Activated CD8-positive, alpha-beta T cell treated with anti-CD3 and anti-CD28 coated beads for 36 hours (primary cell): ENCODE measurements at regions of chr14 and their contacts with region 1.

Region 1: GRCh38 chr14:50830932-50831725 is at the start of gene NIN:
- DNase-seq: peak; percentile 80
- ATAC-seq: peak; percentile 86
- H3K4me3 Mint-ChIP-seq: peak within 1 kb of the TSS; percentile 87
- H3K27ac Mint-ChIP-seq: peak within 1 kb of the TSS; percentile 93
- H3K4me1 Mint-ChIP-seq: peaks cover 54% of the 10 kb centered on the region
- H3K27me3 Mint-ChIP-seq: no peaks in the 10 kb centered on the region
- CTCF ChIP-seq: no peak
- total RNA-seq, gene NIN: 71.9 to 72.8 TPM

Region 2: GRCh38 chr14:50726372-50727107 is 104.6 kb before region 1 on chr14:
- CTCF ChIA-PET with region 1: no interaction called
- POLR2A ChIA-PET with region 1: no interaction called
- intact Hi-C with region 1: no loop called
- DNase-seq: peak; percentile 43
- ATAC-seq: peak; percentile 95
- H3K4me3 Mint-ChIP-seq: peak overlapping the region; percentile 37
- H3K27ac Mint-ChIP-seq: peak overlapping the region; percentile 93
- H3K4me1 Mint-ChIP-seq: peaks cover 32% of the 10 kb centered on the region
- H3K27me3 Mint-ChIP-seq: no peaks in the 10 kb centered on the region
- CTCF ChIP-seq: no peak

Region 3: GRCh38 chr14:50785457-50786063 is 45.6 kb before region 1 on chr14:
- CTCF ChIA-PET with region 1: interaction called, 16 read pairs
- POLR2A ChIA-PET with region 1: interaction called, 17 read pairs
- intact Hi-C with region 1: loop called (anchors 5 kb)
- DNase-seq: no peak
- ATAC-seq: no peak
- H3K4me3 Mint-ChIP-seq: no peak overlapping the region
- H3K27ac Mint-ChIP-seq: peak overlapping the region; percentile 77
- H3K4me1 Mint-ChIP-seq: peaks cover 89% of the 10 kb centered on the region
- H3K27me3 Mint-ChIP-seq: no peaks in the 10 kb centered on the region
- CTCF ChIP-seq: no peak

Region 4: GRCh38 chr14:50792051-50792477 is 39.1 kb before region 1 on chr14:
- CTCF ChIA-PET with region 1: interaction called, 16 read pairs
- POLR2A ChIA-PET with region 1: interaction called, 17 read pairs
- intact Hi-C with region 1: loop called (anchors 5 kb)
- DNase-seq: peak; percentile 58
- ATAC-seq: peak; percentile 65
- H3K4me3 Mint-ChIP-seq: peak overlapping the region; percentile 62
- H3K27ac Mint-ChIP-seq: peak overlapping the region; percentile 87
- H3K4me1 Mint-ChIP-seq: peaks cover 89% of the 10 kb centered on the region
- H3K27me3 Mint-ChIP-seq: no peaks in the 10 kb centered on the region
- CTCF ChIP-seq: no peak

Region 5: DNA sequence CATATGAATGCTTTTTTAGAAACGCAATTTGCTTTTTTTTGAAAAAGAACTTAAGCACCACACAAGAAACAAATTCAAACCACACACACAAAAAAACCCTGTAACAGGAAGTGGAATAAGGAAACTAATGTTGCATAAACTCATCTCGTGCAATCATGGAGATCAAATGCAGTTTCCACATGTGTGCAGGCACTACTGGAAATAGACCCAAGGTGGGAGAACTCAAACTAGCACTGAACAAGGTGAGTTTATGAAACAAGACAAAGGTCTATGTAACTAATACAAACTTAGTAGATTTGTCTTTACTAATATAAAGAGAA is 17.6 kb before region 1 on chr14:
- CTCF ChIA-PET with region 1: interaction called, 7 read pairs
- POLR2A ChIA-PET with region 1: interaction called, 39 read pairs
- intact Hi-C with region 1: no loop called
- DNase-seq: no peak
- ATAC-seq: peak; percentile 70
- H3K4me3 Mint-ChIP-seq: peak overlapping the region; percentile 78
- H3K27ac Mint-ChIP-seq: peak overlapping the region; percentile 99
- H3K4me1 Mint-ChIP-seq: peaks cover 61% of the 10 kb centered on the region
- H3K27me3 Mint-ChIP-seq: no peaks in the 10 kb centered on the region
- CTCF ChIP-seq: no peak